ENCODE measurements at regions of chr19 and their contacts with region 1.

Region 1: DNA sequence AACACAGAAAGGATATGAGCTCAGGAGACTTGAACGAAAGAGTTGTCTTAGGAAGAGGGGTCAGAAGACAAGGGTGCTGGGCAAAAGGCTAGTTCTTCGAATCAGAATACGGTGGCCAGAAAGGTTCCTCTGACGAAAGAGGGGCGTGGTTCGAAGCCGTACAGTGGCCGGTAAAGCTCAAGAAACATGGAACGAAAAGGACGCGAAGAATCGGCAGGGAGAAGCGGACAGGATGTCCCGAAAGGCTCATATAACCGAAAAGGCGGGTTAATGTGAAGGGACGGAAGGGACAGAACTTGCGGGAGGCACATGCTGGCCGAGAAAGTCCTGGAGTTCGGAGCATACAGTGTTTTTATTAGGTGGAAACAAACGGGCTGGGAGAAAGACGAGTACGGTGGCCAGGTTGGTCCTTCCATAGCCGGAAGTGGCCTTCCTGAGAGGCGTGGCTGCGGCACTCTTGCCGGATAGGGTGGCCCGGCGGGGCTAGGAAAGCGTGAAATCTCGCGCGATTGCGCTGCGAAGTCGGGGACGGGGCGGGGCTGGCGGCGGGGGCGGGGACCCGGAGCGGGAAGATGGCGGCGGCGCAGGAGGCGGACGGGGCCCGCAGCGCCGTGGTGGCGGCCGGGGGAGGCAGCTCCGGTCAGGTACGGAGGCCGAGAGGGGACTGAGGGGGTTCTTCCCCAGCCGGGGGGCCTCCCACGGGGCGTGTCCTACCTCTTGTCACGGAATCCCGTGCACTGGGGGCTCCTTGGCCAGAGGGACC is at the start of gene CLPTM1:
- H3K4me3 ChIP-seq: peak within 1 kb of the TSS; percentile 79
- H3K27ac ChIP-seq: peak within 1 kb of the TSS; percentile 74
- H3K4me1 ChIP-seq: peaks cover 13% of the 10 kb centered on the region
- CTCF ChIP-seq: no peak; the same call in 1 of the 2 replicates

Region 2: DNA sequence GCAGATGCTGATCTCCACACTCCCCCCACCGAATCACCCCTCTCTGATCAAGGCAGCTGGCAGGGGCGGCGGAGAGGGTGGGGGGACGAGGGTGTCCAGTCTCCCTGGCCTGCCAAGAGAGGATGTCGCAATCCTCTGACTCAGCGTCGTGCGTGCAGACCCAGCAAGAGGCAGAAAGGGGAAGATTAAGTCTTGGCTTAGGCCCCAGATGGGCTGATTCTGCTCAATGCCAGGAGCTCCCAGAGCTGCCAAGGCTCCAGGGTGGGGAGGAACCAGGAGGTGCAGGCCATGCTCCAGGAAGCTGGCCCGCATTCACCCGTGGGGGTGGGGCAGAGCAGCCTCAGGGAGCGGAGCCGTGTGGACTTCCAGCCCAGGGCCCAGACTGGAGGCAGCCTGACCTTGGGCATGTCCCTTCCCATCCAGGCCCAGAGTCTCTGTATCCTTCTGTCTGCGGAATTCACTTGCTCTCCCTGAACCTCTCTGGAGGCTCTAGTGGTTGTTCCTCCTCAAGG is 213.1 kb before region 1 on chr19:
- CTCF ChIA-PET with region 1: no interaction called
- POLR2A ChIA-PET with region 1: no interaction called
- H3K4me3 ChIP-seq: no peak overlapping the region
- H3K27ac ChIP-seq: peak overlapping the region; percentile 74
- H3K4me1 ChIP-seq: peaks cover 4% of the 10 kb centered on the region
- CTCF ChIP-seq: no peak

Region 3: GRCh38 chr19:44890366-44891015 is 64.5 kb before region 1 on chr19:
- CTCF ChIA-PET with region 1: interaction called, 3 read pairs
- POLR2A ChIA-PET with region 1: interaction called, 14 read pairs
- H3K4me3 ChIP-seq: peak overlapping the region; percentile 42
- H3K27ac ChIP-seq: peak overlapping the region; percentile 70
- H3K4me1 ChIP-seq: peaks cover 6% of the 10 kb centered on the region
- CTCF ChIP-seq: no peak

Region 4: DNA sequence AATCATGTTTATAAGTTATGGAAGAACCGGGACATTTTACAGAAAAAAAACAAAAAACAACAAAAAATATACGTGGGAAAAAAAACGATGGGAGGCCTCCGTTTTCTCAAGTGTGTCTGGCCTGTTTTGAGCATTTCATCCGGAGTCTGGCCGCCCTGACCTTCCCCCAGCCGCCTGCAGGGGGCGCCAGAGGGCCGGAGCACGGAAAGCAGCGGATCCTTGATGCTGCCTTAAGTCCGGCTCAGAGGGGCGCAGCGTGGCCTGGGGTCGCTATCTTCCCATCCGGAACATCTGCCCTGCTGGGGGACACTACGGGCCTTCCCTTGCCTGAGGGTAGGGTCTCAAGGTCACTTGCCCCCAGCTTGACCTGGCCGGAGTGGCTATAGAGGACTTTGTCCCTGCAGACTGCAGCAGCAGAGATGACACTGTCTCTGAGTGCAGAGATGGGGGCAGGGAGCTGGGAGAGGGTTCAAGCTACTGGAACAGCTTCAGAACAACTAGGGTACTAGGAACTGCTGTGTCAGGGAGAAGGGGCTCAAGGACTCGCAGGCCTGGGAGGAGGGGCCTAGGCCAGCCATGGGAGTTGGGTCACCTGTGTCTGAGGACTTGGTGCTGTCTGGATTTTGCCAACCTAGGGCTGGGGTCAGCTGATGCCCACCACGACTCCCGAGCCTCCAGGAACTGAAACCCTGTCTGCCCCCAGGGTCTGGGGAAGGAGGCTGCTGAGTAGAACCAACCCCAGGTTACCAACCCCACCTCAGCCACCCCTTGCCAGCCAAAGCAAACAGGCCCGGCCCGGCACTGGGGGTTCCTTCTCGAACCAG is 51.2 kb before region 1 on chr19:
- CTCF ChIA-PET with region 1: interaction called, 101 read pairs
- POLR2A ChIA-PET with region 1: interaction called, 7 read pairs
- H3K4me3 ChIP-seq: no peak overlapping the region
- H3K27ac ChIP-seq: no peak overlapping the region
- H3K4me1 ChIP-seq: peaks cover 6% of the 10 kb centered on the region; the same call in 1 of the 2 replicates
- CTCF ChIP-seq: peak; percentile 88

Region 5: DNA sequence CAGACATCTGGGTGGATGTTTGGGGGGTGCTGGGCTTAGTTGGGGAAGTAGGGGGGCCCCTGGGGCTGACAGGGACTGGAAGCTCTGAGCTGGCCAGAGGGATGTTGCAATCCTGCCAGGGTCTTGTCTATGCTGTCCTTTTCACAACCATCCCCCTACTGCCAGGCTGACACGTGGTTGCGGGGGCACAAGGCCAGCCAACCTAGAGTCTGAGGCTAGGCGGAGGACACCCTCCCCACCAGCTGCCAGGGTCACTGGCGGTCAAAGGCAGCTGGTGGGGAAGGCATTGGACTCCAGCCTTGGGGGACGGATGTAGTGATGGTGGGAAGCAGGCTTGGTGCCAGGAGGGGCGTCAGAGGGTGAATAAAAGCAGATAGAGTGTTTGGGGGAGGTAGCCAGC is 42.2 kb before region 1 on chr19:
- CTCF ChIA-PET with region 1: interaction called, 11 read pairs
- POLR2A ChIA-PET with region 1: interaction called, 6 read pairs
- H3K4me3 ChIP-seq: no peak overlapping the region
- H3K27ac ChIP-seq: no peak overlapping the region
- H3K4me1 ChIP-seq: no peaks in the 10 kb centered on the region
- CTCF ChIP-seq: no peak

Region 6: DNA sequence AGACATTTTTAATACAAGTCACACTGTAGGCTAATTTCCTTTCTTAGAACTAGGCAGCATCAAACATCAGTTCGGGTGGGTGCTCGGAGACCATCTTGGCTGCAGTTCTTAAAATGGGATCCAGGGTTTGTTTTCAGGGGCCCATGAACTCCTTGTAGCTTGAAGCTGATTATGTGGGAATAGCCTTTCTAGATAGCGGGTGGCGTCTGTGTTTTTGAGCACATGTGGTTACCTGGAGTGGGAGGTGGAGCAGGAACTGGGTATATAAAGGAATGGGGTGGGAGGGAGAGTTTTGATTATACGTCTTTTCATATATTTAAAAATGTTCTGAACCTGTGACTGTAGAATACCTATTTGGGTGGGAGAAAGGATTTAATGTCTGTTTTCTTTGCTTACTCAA is 13.1 kb after region 1 on chr19:
- CTCF ChIA-PET with region 1: interaction called, 15 read pairs
- POLR2A ChIA-PET with region 1: interaction called, 5 read pairs
- H3K4me3 ChIP-seq: no peak overlapping the region
- H3K27ac ChIP-seq: no peak overlapping the region
- H3K4me1 ChIP-seq: no peaks in the 10 kb centered on the region
- CTCF ChIP-seq: no peak

Region 7: GRCh38 chr19:45234089-45234869 is 279.3 kb after region 1 on chr19:
- CTCF ChIA-PET with region 1: no interaction called
- POLR2A ChIA-PET with region 1: no interaction called
- H3K4me3 ChIP-seq: no peak overlapping the region
- H3K27ac ChIP-seq: no peak overlapping the region
- H3K4me1 ChIP-seq: no peaks in the 10 kb centered on the region
- CTCF ChIP-seq: no peak

Measured in HEK293 (cell line).